AG04450 (cell line): ENCODE measurements at regions of chr10 and their contacts with region 1.

Region 1: GRCh38 chr10:63798599-63799498 is 277.6 kb downstream of the REEP3 start:
- DNase-seq: peak; percentile 11
- H3K4me3 ChIP-seq: no peak overlapping the region
- H3K27ac ChIP-seq: no peak overlapping the region
- H3K27me3 ChIP-seq: peaks cover 3% of the 10 kb centered on the region
- CTCF ChIP-seq: no peak

Region 2: DNA sequence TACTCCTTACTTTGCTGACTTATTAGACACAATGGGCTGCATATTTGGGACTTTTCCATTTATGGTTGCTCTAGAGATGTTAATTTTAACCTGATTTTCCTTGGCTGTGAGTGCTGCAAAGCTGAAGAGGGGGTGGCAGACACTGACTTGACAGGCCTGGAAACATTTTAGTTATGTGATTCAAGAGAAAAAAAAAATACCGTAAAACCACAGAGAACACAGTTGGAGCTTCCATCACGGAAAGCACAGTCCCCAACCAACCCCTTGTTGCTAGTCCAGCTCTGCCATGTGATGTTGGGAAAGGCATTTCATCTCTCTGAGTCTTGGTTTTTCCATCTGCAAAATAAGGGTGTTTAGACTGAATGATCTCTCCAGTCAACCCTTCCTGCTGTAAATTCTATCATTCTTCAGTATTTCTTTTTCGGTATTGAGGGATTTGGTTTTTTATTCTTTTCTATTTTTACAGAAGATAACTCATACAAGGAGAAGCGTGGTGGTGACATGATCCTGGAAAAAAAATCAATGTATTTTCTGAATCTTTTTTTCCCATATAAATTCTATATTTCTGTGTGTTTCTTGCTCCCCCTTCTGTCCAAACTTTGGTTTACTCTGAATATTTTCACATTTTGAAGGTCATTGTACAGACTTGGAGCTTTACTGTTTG is 31.6 kb before region 1 on chr10:
- CTCF ChIA-PET with region 1: no interaction called
- POLR2A ChIA-PET with region 1: no interaction called
- DNase-seq: no peak
- H3K4me3 ChIP-seq: no peak overlapping the region
- H3K27ac ChIP-seq: no peak overlapping the region
- H3K27me3 ChIP-seq: no peaks in the 10 kb centered on the region
- CTCF ChIP-seq: peak; percentile 54

Region 3: GRCh38 chr10:63819753-63820329 is 21.0 kb after region 1 on chr10:
- CTCF ChIA-PET with region 1: interaction called, 16 read pairs
- POLR2A ChIA-PET with region 1: no interaction called
- DNase-seq: peak; percentile 18
- H3K4me3 ChIP-seq: no peak overlapping the region
- H3K27ac ChIP-seq: no peak overlapping the region
- H3K27me3 ChIP-seq: no peaks in the 10 kb centered on the region
- CTCF ChIP-seq: peak; percentile 92